Esophagus squamous epithelium (tissue), 5 donors: ENCODE measurements at regions of chr12 and their contacts with region 1.

Region 1: DNA sequence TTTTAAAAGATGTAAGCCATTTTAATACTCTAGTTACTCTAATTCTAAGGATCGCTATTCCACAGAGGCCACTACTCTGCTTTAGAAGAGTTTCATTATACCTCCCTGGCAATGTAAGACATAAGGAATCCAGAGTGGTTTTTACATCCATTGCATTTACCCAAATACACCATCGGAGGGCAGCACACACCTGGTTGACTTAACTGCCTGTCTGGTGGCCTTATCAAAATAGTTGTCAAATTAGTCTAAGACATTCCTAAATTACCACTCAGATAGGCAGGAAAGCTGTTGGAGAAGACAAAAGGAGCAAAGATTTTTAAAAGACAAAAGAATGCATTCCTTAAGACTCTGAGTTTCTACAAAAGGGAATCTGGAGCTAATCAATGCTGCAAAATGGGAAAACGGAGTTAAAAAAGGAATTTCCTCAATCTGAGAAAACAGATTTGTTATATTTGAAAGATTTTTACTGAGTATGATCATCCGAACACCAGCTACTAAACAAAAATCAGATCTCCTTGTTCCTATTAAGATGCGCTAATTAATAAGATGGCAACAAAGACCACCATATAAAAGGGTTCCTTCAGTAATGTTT is 33.8 kb upstream of the FGD4 start:
- DNase-seq: no peak
- H3K4me3 ChIP-seq: no peak overlapping the region
- H3K27ac ChIP-seq: no peak overlapping the region
- H3K4me1 ChIP-seq: no peaks in the 10 kb centered on the region
- H3K27me3 ChIP-seq: no peaks in the 10 kb centered on the region
- CTCF ChIP-seq: peak; percentile 14 to 88 (median 76)
- POLR2A ChIP-seq: no peak

Region 2: GRCh38 chr12:32679091-32679919 is 313.7 kb after region 1 on chr12 and contains the start of gene DNM1L:
- intact Hi-C with region 1: loop called (anchors 10 kb)
- DNase-seq: peak; percentile 51
- H3K4me3 ChIP-seq: peak within 1 kb of the TSS; percentile 72 to 100 (median 90)
- H3K27ac ChIP-seq: peak within 1 kb of the TSS; percentile 92 to 99 (median 96)
- H3K4me1 ChIP-seq: peaks cover 0 to 30% (median 8%) of the 10 kb centered on the region in 3 donors
- H3K27me3 ChIP-seq: no peaks in the 10 kb centered on the region
- CTCF ChIP-seq: peak in 3 of 6 experiments; percentile 1 to 31 (median 25)
- POLR2A ChIP-seq: peak in 3 of 4 donors; percentile 16 to 87 (median 71)
- total RNA-seq, gene DNM1L: 28.2 to 66.2 (median 48.6) TPM